OCI-LY7 (cell line): ENCODE measurements at regions of chr7 and their contacts with region 1.

Region 1: GRCh38 chr7:22559829-22560489 is 60.0 kb upstream of the STEAP1B start:
- DNase-seq: peak; percentile 84
- H3K4me3 ChIP-seq: no peak overlapping the region
- H3K27ac ChIP-seq: no peak overlapping the region
- H3K4me1 ChIP-seq: peaks cover 21% of the 10 kb centered on the region
- CTCF ChIP-seq: peak; percentile 100

Region 2: GRCh38 chr7:22074897-22075296 is 485.1 kb before region 1 on chr7:
- CTCF ChIA-PET with region 1: no interaction called
- POLR2A ChIA-PET with region 1: no interaction called
- intact Hi-C with region 1: no loop called
- DNase-seq: no peak
- H3K4me3 ChIP-seq: no peak overlapping the region
- H3K27ac ChIP-seq: no peak overlapping the region
- H3K4me1 ChIP-seq: no peaks in the 10 kb centered on the region
- CTCF ChIP-seq: no peak

Region 3: DNA sequence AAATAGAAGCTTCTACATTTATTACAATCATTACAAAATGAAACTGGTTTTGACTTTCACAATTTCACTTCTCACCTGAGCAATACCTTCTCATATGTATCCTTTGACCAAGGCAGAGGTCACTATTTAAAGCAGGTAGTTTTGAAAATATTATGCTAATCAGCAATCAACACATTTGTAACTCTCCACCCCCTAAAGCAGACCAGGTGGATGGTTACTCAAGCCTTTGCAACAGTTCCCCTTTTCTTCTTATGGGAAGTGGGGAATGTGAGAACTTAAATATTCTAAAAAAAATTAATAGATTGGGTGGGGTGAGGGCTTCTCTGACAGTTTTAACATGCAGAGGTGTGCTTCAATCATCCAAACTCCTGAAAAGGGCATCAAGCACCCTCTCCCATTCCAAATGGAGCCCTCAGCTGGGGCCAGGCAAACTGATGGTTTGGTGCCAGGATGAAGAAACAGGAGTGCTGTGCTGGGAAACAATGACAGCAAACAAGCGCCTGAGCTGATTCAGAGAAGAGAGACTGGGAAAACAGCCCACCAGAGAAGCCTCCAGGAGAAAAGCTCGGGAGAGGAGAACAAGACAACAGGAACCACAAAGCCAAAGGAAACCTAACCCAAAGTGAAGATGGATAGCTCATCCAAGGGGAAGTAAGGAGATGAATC is 220.1 kb before region 1 on chr7:
- CTCF ChIA-PET with region 1: no interaction called
- POLR2A ChIA-PET with region 1: no interaction called
- intact Hi-C with region 1: no loop called
- DNase-seq: peak; percentile 42
- H3K4me3 ChIP-seq: peak overlapping the region; percentile 17
- H3K27ac ChIP-seq: peak overlapping the region; percentile 52
- H3K4me1 ChIP-seq: peaks cover 55% of the 10 kb centered on the region
- CTCF ChIP-seq: no peak

Region 4: GRCh38 chr7:22627136-22627535 is 67.2 kb after region 1 on chr7:
- CTCF ChIA-PET with region 1: no interaction called
- POLR2A ChIA-PET with region 1: no interaction called
- intact Hi-C with region 1: no loop called
- DNase-seq: no peak
- H3K4me3 ChIP-seq: no peak overlapping the region
- H3K27ac ChIP-seq: no peak overlapping the region
- H3K4me1 ChIP-seq: no peaks in the 10 kb centered on the region
- CTCF ChIP-seq: no peak

Region 5: DNA sequence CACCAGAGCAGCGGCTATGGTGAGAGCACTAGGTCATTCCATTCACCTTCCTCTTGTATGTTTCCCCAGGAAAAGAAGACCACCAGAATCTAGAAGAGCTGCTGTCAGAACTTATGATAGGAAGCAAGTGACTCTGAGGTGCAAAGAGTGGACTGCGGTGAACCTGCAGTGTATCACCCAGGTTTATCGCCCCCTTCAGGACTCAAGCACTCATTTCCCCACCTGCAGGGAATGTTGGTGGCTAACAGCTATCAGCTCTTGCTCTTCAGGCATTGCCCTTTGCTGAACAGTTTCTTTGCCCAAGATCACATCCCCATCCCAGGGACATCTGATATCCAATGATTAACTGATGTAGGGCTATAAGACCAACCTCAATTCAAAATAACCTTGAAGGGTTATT is 100.8 kb after region 1 on chr7:
- CTCF ChIA-PET with region 1: no interaction called
- POLR2A ChIA-PET with region 1: no interaction called
- intact Hi-C with region 1: loop called (anchors 5 kb)
- DNase-seq: peak; percentile 8
- H3K4me3 ChIP-seq: no peak overlapping the region
- H3K27ac ChIP-seq: no peak overlapping the region
- H3K4me1 ChIP-seq: no peaks in the 10 kb centered on the region
- CTCF ChIP-seq: peak; percentile 70

Region 6: GRCh38 chr7:22726345-22727185 is 166.6 kb after region 1 on chr7:
- CTCF ChIA-PET with region 1: interaction called, 15 read pairs
- POLR2A ChIA-PET with region 1: interaction called, 11 read pairs
- intact Hi-C with region 1: loop called (anchors 1 kb)
- DNase-seq: peak; percentile 70
- H3K4me3 ChIP-seq: no peak overlapping the region
- H3K27ac ChIP-seq: no peak overlapping the region
- H3K4me1 ChIP-seq: peaks cover 3% of the 10 kb centered on the region
- CTCF ChIP-seq: peak; percentile 82

Region 7: DNA sequence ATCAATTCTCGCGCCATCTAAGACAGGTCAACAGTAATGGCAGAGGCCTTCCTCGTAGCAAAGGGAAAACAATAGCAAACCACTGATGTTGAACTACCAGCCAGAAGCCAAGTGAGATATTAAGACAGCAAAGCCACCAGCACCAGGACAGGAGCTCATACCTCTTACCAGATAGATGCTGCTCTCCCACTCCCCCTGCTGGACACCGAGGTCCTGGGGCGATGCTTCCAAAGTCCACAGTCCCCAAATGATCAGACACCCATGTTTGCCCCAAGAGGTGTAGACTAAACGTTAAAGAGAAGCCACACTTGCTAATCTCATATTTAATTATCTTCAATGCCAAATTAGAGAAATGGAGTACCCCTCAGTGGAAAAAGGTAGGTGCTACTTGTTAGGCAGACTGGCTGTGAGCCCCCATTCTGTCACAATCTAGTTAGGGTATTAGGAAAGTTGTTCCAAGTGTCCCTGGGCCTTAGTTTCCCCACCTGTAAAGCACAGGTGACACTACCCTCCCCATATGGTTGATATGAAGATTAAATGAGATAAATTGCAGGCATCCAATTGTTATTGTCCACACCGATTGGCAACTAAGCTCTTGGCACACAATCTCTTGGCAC is 222.8 kb after region 1 on chr7:
- CTCF ChIA-PET with region 1: no interaction called
- POLR2A ChIA-PET with region 1: interaction called, 5 read pairs
- intact Hi-C with region 1: loop called (anchors 1 kb)
- DNase-seq: peak; percentile 75
- H3K4me3 ChIP-seq: no peak overlapping the region
- H3K27ac ChIP-seq: no peak overlapping the region
- H3K4me1 ChIP-seq: no peaks in the 10 kb centered on the region
- CTCF ChIP-seq: peak; percentile 97

Region 8: DNA sequence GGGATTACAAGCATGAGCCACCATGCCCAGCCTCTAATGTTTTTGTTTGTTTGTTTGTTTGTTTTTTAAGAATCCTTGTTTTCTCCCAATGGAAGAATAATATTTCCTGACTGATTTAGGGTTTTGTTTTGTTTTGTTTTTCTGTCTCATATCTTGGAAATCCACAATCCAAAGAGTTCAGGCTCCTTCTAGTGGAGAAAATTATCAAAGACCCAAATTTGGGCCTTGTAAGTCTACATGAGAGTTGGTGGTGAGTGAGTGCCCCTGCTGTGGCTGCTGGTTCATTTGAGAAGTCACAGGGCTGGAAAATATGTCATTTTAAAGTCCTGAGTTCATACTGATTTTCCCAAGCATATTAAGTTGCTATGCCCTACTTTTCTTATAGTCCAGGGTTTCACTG is 512.1 kb after region 1 on chr7:
- CTCF ChIA-PET with region 1: no interaction called
- POLR2A ChIA-PET with region 1: no interaction called
- intact Hi-C with region 1: loop called (anchors 5 kb)
- DNase-seq: peak; percentile 24
- H3K4me3 ChIP-seq: no peak overlapping the region
- H3K27ac ChIP-seq: no peak overlapping the region
- H3K4me1 ChIP-seq: no peaks in the 10 kb centered on the region
- CTCF ChIP-seq: peak; percentile 65